Left ventricle myocardium inferior (tissue), 1 donor: ENCODE measurements at regions of chr18 and their contacts with region 1.

Region 1: GRCh38 chr18:22789600-22789999 is 143.5 kb upstream of the RBBP8 start:
- DNase-seq: no peak
- H3K4me3 ChIP-seq: no peak overlapping the region
- H3K27ac ChIP-seq: no peak overlapping the region
- H3K4me1 ChIP-seq: no peaks in the 10 kb centered on the region
- H3K27me3 ChIP-seq: no peaks in the 10 kb centered on the region
- CTCF ChIP-seq: no peak

Region 2: DNA sequence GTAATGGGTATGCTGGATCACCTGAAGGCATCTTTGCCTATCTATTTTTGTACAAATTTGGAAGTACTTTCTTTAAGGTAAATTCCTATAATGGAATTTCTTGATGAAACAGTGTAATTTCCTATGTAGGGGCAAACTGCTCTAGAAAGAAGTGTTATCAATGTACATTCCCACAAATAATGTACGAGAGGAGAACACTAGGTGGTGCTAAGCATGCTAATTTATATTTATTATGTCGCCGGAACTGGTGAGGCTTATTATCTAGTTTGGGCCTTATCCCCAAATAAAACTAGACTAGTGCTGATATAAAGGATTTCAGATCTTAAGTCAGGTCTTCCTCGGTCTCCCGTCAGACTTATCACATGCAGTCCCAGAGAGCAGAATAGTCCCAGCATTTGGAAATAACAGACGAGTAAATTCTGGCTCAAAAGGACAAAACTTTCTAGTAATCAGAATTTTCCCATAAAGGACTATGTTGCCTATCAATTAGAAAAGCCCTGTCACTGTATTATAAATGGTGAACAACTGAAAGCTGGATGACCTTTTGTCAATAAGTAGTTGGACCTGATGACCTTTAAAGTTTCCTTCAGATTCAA is 56.6 kb after region 1 on chr18:
- intact Hi-C with region 1: loop called (anchors 10 kb)
- DNase-seq: no peak
- H3K4me3 ChIP-seq: no peak overlapping the region
- H3K27ac ChIP-seq: no peak overlapping the region
- H3K4me1 ChIP-seq: peaks cover 3% of the 10 kb centered on the region
- H3K27me3 ChIP-seq: no peaks in the 10 kb centered on the region
- CTCF ChIP-seq: peak; percentile 57